ENCODE measurements at regions of chr2 and their contacts with region 1.

Region 1: DNA sequence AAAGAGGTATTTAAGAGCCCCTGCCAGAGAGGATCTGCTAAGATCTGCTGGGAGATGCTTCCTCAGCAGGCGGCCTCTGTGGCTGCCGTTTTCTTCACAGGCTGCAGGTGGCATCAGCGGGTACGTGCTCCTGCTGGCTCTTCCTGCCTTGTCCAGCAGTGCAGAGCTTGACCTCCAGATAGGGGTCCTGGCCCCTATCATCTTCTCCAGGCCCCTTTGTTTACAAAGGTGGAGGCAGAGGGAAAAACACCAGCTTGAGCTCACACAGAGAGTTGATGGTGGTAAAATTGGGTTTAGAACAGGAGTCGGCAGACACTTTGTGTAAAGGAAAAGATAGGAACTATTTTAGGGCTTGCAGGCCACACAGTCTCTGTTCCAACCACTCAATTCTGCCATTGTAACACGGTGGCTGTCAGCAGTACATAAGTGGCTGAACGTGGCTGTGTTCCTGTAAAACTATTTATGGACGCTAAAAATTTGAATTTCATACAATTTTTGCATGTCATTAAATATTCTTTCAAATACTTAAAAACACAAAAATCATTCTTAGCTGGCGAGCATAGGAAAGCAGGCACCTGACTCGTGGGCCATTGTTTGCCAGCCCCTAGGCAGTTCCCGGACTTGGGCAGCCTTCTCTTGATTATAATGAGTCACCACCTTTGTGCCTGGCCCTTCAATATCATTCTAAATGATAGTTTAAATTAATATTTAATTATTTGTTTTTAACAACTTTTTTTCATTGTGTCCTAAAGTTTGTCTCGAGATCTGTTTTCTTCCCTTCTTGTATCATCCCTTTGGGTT is 98.2 kb upstream of the B3GNT7 start:
- DNase-seq: no peak
- H3K4me3 ChIP-seq: no peak overlapping the region
- H3K27ac ChIP-seq: no peak overlapping the region
- H3K4me1 ChIP-seq: no peaks in the 10 kb centered on the region
- H3K27me3 ChIP-seq: no peaks in the 10 kb centered on the region
- CTCF ChIP-seq: peak; percentile 41 to 60 (median 45)

Region 2: GRCh38 chr2:231411831-231412617 is 114.7 kb after region 1 on chr2:
- intact Hi-C with region 1: loop called (anchors 1 kb)
- DNase-seq: peak; percentile 53 to 93
- H3K4me3 ChIP-seq: peak overlapping the region; percentile 73 to 92
- H3K27ac ChIP-seq: peak overlapping the region; percentile 8 to 26
- H3K4me1 ChIP-seq: peaks cover 0 to 5% of the 10 kb centered on the region in 2 donors
- H3K27me3 ChIP-seq: no peaks in the 10 kb centered on the region
- CTCF ChIP-seq: peak; percentile 82 to 97 (median 96)